ENCODE measurements at regions of chr12 and their contacts with region 1.

Region 1: GRCh38 chr12:57389033-57389432 is 41.8 kb downstream of the R3HDM2 start:
- DNase-seq: peak; percentile 92
- ATAC-seq: peak; percentile 97
- H3K4me3 ChIP-seq: peak overlapping the region; percentile 6; the same call in 1 of the 2 replicates
- H3K27ac ChIP-seq: peak overlapping the region; percentile 79
- H3K4me1 ChIP-seq: peaks cover 27% of the 10 kb centered on the region
- H3K27me3 ChIP-seq: no peaks in the 10 kb centered on the region
- CTCF ChIP-seq: no peak

Region 2: DNA sequence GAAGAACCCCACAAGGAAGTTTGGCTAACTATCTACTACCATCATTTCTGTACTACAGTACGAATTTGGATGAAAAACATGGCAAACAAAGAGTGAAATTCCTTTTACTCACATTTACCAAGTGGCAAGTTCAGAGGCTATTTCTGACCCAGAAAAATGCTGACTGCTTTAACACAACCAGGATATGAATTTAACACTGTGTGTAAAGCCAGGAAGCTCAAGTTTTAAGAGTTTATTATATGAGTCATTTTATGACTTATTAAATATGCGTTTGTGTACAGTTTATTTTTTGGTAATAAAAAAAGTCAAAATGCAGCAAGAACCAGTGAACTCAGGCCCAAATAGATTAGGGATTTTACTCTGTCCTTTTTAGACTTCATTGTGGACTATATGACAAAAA is 79.6 kb before region 1 on chr12:
- CTCF ChIA-PET with region 1: interaction called, 6 read pairs
- POLR2A ChIA-PET with region 1: no interaction called
- intact Hi-C with region 1: loop called (anchors 1 kb)
- DNase-seq: peak; percentile 84
- ATAC-seq: peak; percentile 89
- H3K4me3 ChIP-seq: peak overlapping the region; percentile 31; the same call in 1 of the 2 replicates
- H3K27ac ChIP-seq: peak overlapping the region; percentile 84
- H3K4me1 ChIP-seq: peaks cover 30% of the 10 kb centered on the region
- H3K27me3 ChIP-seq: no peaks in the 10 kb centered on the region
- CTCF ChIP-seq: no peak

Measured in PC-3 (cell line).